Caco-2 (cell line): ENCODE measurements at regions of chr12 and their contacts with region 1.

Region 1: GRCh38 chr12:88931596-88931995 is 351.3 kb upstream of the KITLG start:
- DNase-seq: peak; percentile 76 to 89
- H3K4me3 ChIP-seq: no peak overlapping the region
- H3K4me3 Mint-ChIP-seq: peak overlapping the region; percentile 28
- H3K27ac Mint-ChIP-seq: peak overlapping the region; percentile 80
- H3K4me1 ChIP-seq: peaks cover 91% of the 10 kb centered on the region
- H3K4me1 Mint-ChIP-seq: peaks cover 56% of the 10 kb centered on the region
- H3K27me3 ChIP-seq: no peaks in the 10 kb centered on the region
- H3K27me3 Mint-ChIP-seq: no peaks in the 10 kb centered on the region
- CTCF ChIP-seq: no peak

Region 2: GRCh38 chr12:88580051-88580871 is 351.3 kb before region 1 on chr12 and contains the start of gene KITLG:
- CTCF ChIA-PET with region 1: no interaction called
- POLR2A ChIA-PET with region 1: no interaction called
- intact Hi-C with region 1: loop called (anchors 1 kb)
- DNase-seq: peak; percentile 90 to 94
- H3K4me3 ChIP-seq: peak within 1 kb of the TSS; percentile 74
- H3K4me3 Mint-ChIP-seq: peak within 1 kb of the TSS; percentile 86
- H3K27ac Mint-ChIP-seq: peak within 1 kb of the TSS; percentile 87
- H3K4me1 ChIP-seq: peaks cover 14% of the 10 kb centered on the region
- H3K4me1 Mint-ChIP-seq: no peaks in the 10 kb centered on the region
- H3K27me3 ChIP-seq: no peaks in the 10 kb centered on the region
- H3K27me3 Mint-ChIP-seq: no peaks in the 10 kb centered on the region
- CTCF ChIP-seq: peak in 1 of 2 experiments; percentile 43
- total RNA-seq, gene KITLG: 200 and 211 TPM in 2 replicates

Region 3: GRCh38 chr12:88753066-88753465 is 178.5 kb before region 1 on chr12:
- CTCF ChIA-PET with region 1: no interaction called
- POLR2A ChIA-PET with region 1: no interaction called
- intact Hi-C with region 1: loop called (anchors 2 kb)
- DNase-seq: no peak
- H3K4me3 ChIP-seq: no peak overlapping the region
- H3K4me3 Mint-ChIP-seq: no peak overlapping the region
- H3K27ac Mint-ChIP-seq: peak overlapping the region; percentile 9
- H3K4me1 ChIP-seq: peaks cover 48% of the 10 kb centered on the region
- H3K4me1 Mint-ChIP-seq: peaks cover 34% of the 10 kb centered on the region
- H3K27me3 ChIP-seq: no peaks in the 10 kb centered on the region
- H3K27me3 Mint-ChIP-seq: no peaks in the 10 kb centered on the region
- CTCF ChIP-seq: no peak

Region 4: GRCh38 chr12:88854260-88854659 is 77.3 kb before region 1 on chr12:
- CTCF ChIA-PET with region 1: no interaction called
- POLR2A ChIA-PET with region 1: no interaction called
- intact Hi-C with region 1: loop called (anchors 1 kb)
- DNase-seq: peak in 1 of 2 experiments; percentile 63
- H3K4me3 ChIP-seq: no peak overlapping the region
- H3K4me3 Mint-ChIP-seq: peak overlapping the region; percentile 20
- H3K27ac Mint-ChIP-seq: peak overlapping the region; percentile 84
- H3K4me1 ChIP-seq: peaks cover 26% of the 10 kb centered on the region
- H3K4me1 Mint-ChIP-seq: peaks cover 20% of the 10 kb centered on the region
- H3K27me3 ChIP-seq: no peaks in the 10 kb centered on the region
- H3K27me3 Mint-ChIP-seq: no peaks in the 10 kb centered on the region
- CTCF ChIP-seq: no peak

Region 5: DNA sequence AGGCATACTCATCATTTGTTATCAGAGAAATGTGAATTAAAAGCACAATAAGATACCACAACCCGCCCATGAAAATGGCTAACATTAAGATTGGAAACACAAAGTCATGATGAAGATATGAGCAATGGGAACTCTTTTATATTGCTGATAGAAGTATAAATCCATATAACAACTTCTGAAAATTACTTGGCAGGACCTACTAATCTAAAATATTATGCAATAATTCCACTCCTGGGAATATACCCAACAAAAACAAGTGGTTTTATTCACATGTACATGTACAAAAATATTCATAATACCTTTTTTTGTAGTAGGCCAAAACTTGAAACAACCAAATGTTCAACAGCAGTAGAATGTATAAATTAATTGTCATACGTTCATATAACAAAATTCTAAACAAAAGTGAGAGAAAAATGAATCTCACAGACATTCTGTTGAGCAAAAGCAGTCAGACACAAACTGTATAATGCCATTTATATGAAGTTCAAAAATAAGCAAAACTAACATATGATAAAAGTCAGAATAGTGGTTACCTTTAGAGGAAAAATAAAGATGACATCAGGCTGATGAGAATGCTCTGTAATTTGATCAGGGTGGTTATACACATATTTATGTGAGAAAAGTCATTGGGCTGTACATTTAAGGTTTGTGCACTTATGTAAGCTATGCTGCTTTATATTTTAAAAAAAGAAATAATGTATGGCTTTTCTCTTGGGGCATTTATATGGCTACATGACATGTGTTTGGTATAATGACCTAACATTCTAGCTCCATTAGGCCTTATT is 42.1 kb before region 1 on chr12:
- CTCF ChIA-PET with region 1: no interaction called
- POLR2A ChIA-PET with region 1: no interaction called
- intact Hi-C with region 1: no loop called
- DNase-seq: no peak
- H3K4me3 ChIP-seq: no peak overlapping the region
- H3K4me3 Mint-ChIP-seq: no peak overlapping the region
- H3K27ac Mint-ChIP-seq: no peak overlapping the region
- H3K4me1 ChIP-seq: no peaks in the 10 kb centered on the region
- H3K4me1 Mint-ChIP-seq: peaks cover 6% of the 10 kb centered on the region
- H3K27me3 ChIP-seq: no peaks in the 10 kb centered on the region
- H3K27me3 Mint-ChIP-seq: no peaks in the 10 kb centered on the region
- CTCF ChIP-seq: no peak

Region 6: GRCh38 chr12:88952562-88952942 is 21.0 kb after region 1 on chr12:
- CTCF ChIA-PET with region 1: no interaction called
- POLR2A ChIA-PET with region 1: no interaction called
- intact Hi-C with region 1: loop called (anchors 1 kb)
- DNase-seq: no peak
- H3K4me3 ChIP-seq: no peak overlapping the region
- H3K4me3 Mint-ChIP-seq: peak overlapping the region; percentile 6
- H3K27ac Mint-ChIP-seq: peak overlapping the region; percentile 72
- H3K4me1 ChIP-seq: peaks cover 80% of the 10 kb centered on the region
- H3K4me1 Mint-ChIP-seq: peaks cover 64% of the 10 kb centered on the region
- H3K27me3 ChIP-seq: no peaks in the 10 kb centered on the region
- H3K27me3 Mint-ChIP-seq: no peaks in the 10 kb centered on the region
- CTCF ChIP-seq: no peak

Region 7: GRCh38 chr12:88985475-88986030 is 54.0 kb after region 1 on chr12:
- CTCF ChIA-PET with region 1: no interaction called
- POLR2A ChIA-PET with region 1: no interaction called
- intact Hi-C with region 1: loop called (anchors 1 kb)
- DNase-seq: no peak
- H3K4me3 ChIP-seq: no peak overlapping the region
- H3K4me3 Mint-ChIP-seq: no peak overlapping the region
- H3K27ac Mint-ChIP-seq: peak overlapping the region; percentile 50
- H3K4me1 ChIP-seq: peaks cover 44% of the 10 kb centered on the region
- H3K4me1 Mint-ChIP-seq: peaks cover 12% of the 10 kb centered on the region
- H3K27me3 ChIP-seq: no peaks in the 10 kb centered on the region
- H3K27me3 Mint-ChIP-seq: no peaks in the 10 kb centered on the region
- CTCF ChIP-seq: no peak